ENCODE measurements at regions of chr4 and their contacts with region 1.

Region 1: DNA sequence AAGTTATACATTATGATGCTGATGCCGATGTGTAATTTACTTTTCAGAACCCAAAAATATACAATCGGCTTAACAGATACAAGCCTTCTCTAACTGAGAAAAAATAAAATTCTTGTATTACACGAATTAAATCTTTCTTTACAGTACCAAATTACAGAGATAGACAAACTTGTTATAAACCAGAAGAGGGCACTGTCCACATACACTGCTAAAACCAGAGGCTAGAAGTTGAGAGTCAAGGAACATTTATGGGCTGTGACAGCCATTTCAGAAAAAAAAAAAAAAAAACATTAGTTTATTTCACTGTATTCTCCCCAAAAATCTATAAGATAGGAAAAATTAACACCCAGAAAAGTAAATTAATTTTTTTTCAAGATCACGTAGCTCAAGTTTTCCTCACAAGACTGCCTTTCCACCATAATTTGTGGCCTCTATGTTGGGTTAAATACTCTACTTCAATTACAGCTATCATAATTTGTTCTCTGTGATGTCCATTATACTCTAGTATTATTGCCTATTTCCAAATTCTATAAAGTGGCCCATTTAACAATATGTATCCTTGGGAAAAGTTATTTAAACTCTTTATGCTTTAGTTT is 12.0 kb downstream of the EREG start:
- DNase-seq: peak in 1 of 2 experiments; percentile 30
- H3K4me3 ChIP-seq: no peak overlapping the region
- H3K4me3 Mint-ChIP-seq: no peak overlapping the region
- H3K27ac Mint-ChIP-seq: no peak overlapping the region
- H3K4me1 ChIP-seq: peaks cover 41% of the 10 kb centered on the region
- H3K4me1 Mint-ChIP-seq: peaks cover 9% of the 10 kb centered on the region
- H3K27me3 ChIP-seq: no peaks in the 10 kb centered on the region
- H3K27me3 Mint-ChIP-seq: no peaks in the 10 kb centered on the region
- CTCF ChIP-seq: peak; percentile 44 to 55

Region 2: GRCh38 chr4:74123065-74123728 is 253.8 kb before region 1 on chr4:
- CTCF ChIA-PET with region 1: no interaction called
- POLR2A ChIA-PET with region 1: no interaction called
- intact Hi-C with region 1: no loop called
- DNase-seq: no peak
- H3K4me3 ChIP-seq: no peak overlapping the region
- H3K4me3 Mint-ChIP-seq: no peak overlapping the region
- H3K27ac Mint-ChIP-seq: no peak overlapping the region
- H3K4me1 ChIP-seq: no peaks in the 10 kb centered on the region
- H3K4me1 Mint-ChIP-seq: no peaks in the 10 kb centered on the region
- H3K27me3 ChIP-seq: no peaks in the 10 kb centered on the region
- H3K27me3 Mint-ChIP-seq: no peaks in the 10 kb centered on the region
- CTCF ChIP-seq: no peak

Region 3: DNA sequence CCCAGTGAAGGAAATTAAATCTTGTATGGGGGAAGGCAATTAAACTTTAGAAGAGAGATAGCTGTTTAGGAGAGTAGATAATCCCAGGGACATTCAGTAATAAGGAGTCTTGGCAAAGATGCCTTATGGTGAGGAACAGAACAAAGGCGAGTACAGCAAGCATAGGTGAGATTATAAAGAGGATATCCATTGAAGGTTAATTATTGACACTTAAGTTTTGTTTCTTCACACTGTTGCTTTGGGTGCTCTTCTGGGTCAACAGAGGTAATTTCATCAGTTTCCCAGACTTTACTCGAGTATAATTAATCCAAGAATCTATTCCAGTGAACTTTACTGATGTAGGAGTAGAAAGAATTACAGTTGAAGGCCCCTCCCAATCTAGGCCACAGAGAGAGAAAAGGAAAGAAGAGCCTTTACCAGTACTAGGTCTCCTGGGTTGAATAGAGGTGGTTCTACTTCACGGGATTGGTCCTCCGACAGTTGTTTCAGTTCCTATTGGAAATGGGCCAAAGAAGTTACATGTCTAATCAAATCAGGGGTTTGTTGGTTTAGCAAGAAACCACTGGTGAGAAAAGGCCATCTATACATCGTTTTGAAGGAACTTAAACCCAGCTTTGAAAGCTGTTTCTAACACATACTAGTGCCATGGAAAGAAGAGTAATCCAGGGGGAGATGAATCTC is 41.5 kb before region 1 on chr4:
- CTCF ChIA-PET with region 1: no interaction called
- POLR2A ChIA-PET with region 1: no interaction called
- intact Hi-C with region 1: no loop called
- DNase-seq: no peak
- H3K4me3 ChIP-seq: no peak overlapping the region
- H3K4me3 Mint-ChIP-seq: no peak overlapping the region
- H3K27ac Mint-ChIP-seq: no peak overlapping the region
- H3K4me1 ChIP-seq: no peaks in the 10 kb centered on the region
- H3K4me1 Mint-ChIP-seq: no peaks in the 10 kb centered on the region
- H3K27me3 ChIP-seq: no peaks in the 10 kb centered on the region
- H3K27me3 Mint-ChIP-seq: no peaks in the 10 kb centered on the region
- CTCF ChIP-seq: no peak

Region 4: GRCh38 chr4:74444891-74445642 is 68.1 kb after region 1 on chr4 and contains the start of gene AREG:
- CTCF ChIA-PET with region 1: no interaction called
- POLR2A ChIA-PET with region 1: no interaction called
- intact Hi-C with region 1: loop called (anchors 1 kb)
- DNase-seq: peak; percentile 85 to 88
- H3K4me3 ChIP-seq: peak within 1 kb of the TSS; percentile 82
- H3K4me3 Mint-ChIP-seq: peak within 1 kb of the TSS; percentile 86
- H3K27ac Mint-ChIP-seq: peak within 1 kb of the TSS; percentile 73
- H3K4me1 ChIP-seq: peaks cover 8% of the 10 kb centered on the region
- H3K4me1 Mint-ChIP-seq: peaks cover 6% of the 10 kb centered on the region
- H3K27me3 ChIP-seq: no peaks in the 10 kb centered on the region
- H3K27me3 Mint-ChIP-seq: no peaks in the 10 kb centered on the region
- CTCF ChIP-seq: peak; percentile 43 to 68
- total RNA-seq, gene AREG: 146 and 162 TPM in 2 replicates

Region 5: DNA sequence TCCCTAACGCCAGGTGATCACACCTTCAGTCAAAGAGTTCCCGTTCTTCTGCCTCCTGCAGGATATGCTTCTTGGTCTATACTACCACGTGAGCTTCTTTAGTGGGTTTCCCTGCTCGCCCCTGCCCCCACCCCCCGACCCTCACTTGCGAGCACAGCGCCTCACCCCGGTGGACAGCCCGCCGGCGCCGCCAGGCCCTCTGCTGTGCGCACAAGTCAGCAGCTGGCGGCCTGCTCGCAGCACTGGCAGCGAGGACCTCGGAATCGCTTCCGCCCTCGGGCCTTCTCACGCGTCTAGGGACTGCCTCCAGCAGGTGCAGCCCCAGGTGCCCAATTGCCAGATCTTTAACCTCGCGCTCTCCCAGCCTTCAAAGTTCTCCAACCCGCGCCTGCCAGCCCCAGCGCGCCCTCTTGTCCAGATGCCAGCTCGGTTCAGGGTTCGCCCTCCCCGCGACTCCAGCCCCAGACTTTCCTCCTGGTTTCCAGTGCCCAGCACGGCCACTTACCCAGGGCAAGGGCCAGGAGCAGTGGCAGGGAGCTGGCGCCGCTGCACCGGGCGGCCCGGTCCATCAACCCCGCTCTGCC is 416.9 kb after region 1 on chr4:
- CTCF ChIA-PET with region 1: no interaction called
- POLR2A ChIA-PET with region 1: no interaction called
- intact Hi-C with region 1: loop called (anchors 5 kb)
- DNase-seq: peak; percentile 57 to 64
- H3K4me3 ChIP-seq: peak overlapping the region; percentile 43
- H3K4me3 Mint-ChIP-seq: peak overlapping the region; percentile 89
- H3K27ac Mint-ChIP-seq: peak overlapping the region; percentile 54
- H3K4me1 ChIP-seq: no peaks in the 10 kb centered on the region
- H3K4me1 Mint-ChIP-seq: peaks cover 7% of the 10 kb centered on the region
- H3K27me3 ChIP-seq: 0 out of 2 replicates have a peak, but pooled peaks cover 1% of the 10 kb centered on the region
- H3K27me3 Mint-ChIP-seq: peaks cover 26% of the 10 kb centered on the region
- CTCF ChIP-seq: peak; percentile 12 to 72

Measured in Caco-2 (cell line).